ENCODE measurements at regions of chr12 and their contacts with region 1.

Region 1: GRCh38 chr12:56636675-56637540 is 6.8 kb upstream of the BAZ2A start:
- DNase-seq: peak; percentile 96
- H3K4me3 Mint-ChIP-seq: peak overlapping the region; percentile 82
- H3K27ac Mint-ChIP-seq: peak overlapping the region; percentile 86
- H3K4me1 Mint-ChIP-seq: peaks cover 45% of the 10 kb centered on the region
- H3K27me3 Mint-ChIP-seq: no peaks in the 10 kb centered on the region

Region 2: DNA sequence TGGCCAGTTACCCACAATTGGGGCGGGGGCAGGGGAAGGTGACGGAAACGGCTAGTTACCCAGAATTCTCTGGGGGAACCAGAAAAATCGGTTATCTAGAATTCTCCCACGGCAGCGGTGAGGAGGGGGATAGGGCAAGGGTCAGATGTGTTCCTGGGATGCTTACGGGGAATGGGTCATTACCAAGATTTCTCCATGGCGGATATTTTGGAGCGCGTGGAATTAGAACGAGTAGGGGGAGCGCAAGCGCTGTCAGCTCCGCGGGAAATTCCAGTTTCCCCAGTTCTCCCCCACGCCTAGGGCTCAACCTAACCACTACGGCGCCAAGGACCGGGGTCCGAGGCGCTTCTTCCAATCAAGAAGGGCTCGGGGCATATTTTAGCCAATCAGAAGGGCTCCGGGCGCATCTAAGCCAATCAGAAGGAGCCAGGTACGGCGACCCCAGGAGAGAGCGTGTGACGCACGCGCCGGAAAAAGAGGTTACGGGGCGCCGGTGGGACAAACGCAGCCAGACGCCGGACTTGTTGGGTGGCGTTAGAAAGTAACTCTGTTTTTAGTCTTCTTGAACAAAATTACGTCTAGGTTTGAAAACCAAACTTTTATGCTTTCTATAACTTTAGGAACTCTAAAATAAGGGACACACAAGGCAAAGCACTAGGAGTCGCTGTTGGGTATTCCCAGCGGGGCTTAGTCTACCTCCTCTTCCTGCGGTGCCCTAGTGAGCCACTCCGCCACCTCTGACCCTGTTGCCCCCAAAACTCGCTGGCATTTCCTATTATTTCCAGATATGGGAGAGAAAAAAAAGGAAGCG is 303.0 kb before region 1 on chr12 and contains the start of gene PAN2:
- CTCF ChIA-PET with region 1: interaction called, 3 read pairs
- POLR2A ChIA-PET with region 1: no interaction called
- intact Hi-C with region 1: loop called (anchors 1 kb)
- DNase-seq: peak; percentile 97
- H3K4me3 Mint-ChIP-seq: peak within 1 kb of the TSS; percentile 94
- H3K27ac Mint-ChIP-seq: peak within 1 kb of the TSS; percentile 99
- H3K4me1 Mint-ChIP-seq: peaks cover 43% of the 10 kb centered on the region
- H3K27me3 Mint-ChIP-seq: no peaks in the 10 kb centered on the region
- total RNA-seq, gene PAN2: 49.0 to 51.2 TPM

Region 3: DNA sequence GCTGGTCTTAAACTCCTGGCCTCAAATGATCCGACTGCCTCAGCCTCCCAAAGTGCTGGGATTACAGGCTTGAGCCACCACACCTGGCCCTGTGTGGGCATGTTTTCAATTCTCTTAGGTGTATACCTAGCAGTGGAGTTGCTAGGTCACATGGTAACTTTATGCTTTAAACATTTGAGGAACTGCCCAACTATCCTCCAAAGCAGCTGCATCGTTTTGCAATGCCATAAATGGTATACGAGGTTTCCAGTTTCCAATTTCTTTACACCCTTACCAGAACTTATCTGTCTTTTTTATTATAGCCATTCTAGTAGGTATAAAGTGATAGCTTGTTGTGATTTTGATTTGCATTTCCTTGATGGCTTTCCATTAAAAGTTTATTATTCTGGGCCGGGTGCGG is 90.2 kb before region 1 on chr12:
- CTCF ChIA-PET with region 1: no interaction called
- POLR2A ChIA-PET with region 1: no interaction called
- intact Hi-C with region 1: no loop called
- DNase-seq: no peak
- H3K4me3 Mint-ChIP-seq: no peak overlapping the region
- H3K27ac Mint-ChIP-seq: no peak overlapping the region
- H3K4me1 Mint-ChIP-seq: no peaks in the 10 kb centered on the region
- H3K27me3 Mint-ChIP-seq: no peaks in the 10 kb centered on the region

Region 4: GRCh38 chr12:56601503-56601902 is 35.4 kb before region 1 on chr12:
- CTCF ChIA-PET with region 1: interaction called, 19 read pairs
- POLR2A ChIA-PET with region 1: no interaction called
- intact Hi-C with region 1: loop called (anchors 5 kb)
- DNase-seq: peak; percentile 47
- H3K4me3 Mint-ChIP-seq: no peak overlapping the region
- H3K27ac Mint-ChIP-seq: no peak overlapping the region
- H3K4me1 Mint-ChIP-seq: no peaks in the 10 kb centered on the region
- H3K27me3 Mint-ChIP-seq: no peaks in the 10 kb centered on the region

Region 5: DNA sequence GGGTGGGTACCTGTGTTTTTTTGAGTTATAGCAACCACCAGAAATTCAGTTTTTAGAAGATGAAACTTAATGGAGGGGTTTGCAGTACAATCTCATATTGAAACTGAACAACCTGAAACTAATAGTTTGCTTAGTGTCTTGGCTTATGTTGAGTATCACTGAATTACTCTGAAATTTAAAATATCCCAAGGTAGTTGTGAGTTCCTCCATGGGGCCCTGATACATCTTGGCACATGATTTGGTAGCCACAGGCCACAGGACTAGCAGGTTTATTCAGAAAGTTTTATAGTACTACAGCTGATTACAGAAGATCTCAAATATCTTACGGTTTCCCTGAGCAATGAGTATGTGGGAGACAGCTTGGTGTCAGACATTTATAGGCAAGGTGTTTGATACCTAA is 40.8 kb after region 1 on chr12:
- CTCF ChIA-PET with region 1: interaction called, 19 read pairs
- POLR2A ChIA-PET with region 1: interaction called, 59 read pairs
- intact Hi-C with region 1: no loop called
- DNase-seq: peak; percentile 57
- H3K4me3 Mint-ChIP-seq: no peak overlapping the region
- H3K27ac Mint-ChIP-seq: peak overlapping the region; percentile 56
- H3K4me1 Mint-ChIP-seq: peaks cover 67% of the 10 kb centered on the region
- H3K27me3 Mint-ChIP-seq: no peaks in the 10 kb centered on the region

Region 6: GRCh38 chr12:57088459-57089248 is 451.7 kb after region 1 on chr12 and contains the start of gene NAB2:
- CTCF ChIA-PET with region 1: no interaction called
- POLR2A ChIA-PET with region 1: no interaction called
- intact Hi-C with region 1: loop called (anchors 5 kb)
- DNase-seq: peak; percentile 92
- H3K4me3 Mint-ChIP-seq: peak within 1 kb of the TSS; percentile 91
- H3K27ac Mint-ChIP-seq: peak within 1 kb of the TSS; percentile 95
- H3K4me1 Mint-ChIP-seq: peaks cover 61% of the 10 kb centered on the region
- H3K27me3 Mint-ChIP-seq: no peaks in the 10 kb centered on the region
- total RNA-seq, gene NAB2: 39.6 to 41.6 TPM